Psoas muscle (tissue), 8 donors: ENCODE measurements at regions of chr21 and their contacts with region 1.

Region 1: DNA sequence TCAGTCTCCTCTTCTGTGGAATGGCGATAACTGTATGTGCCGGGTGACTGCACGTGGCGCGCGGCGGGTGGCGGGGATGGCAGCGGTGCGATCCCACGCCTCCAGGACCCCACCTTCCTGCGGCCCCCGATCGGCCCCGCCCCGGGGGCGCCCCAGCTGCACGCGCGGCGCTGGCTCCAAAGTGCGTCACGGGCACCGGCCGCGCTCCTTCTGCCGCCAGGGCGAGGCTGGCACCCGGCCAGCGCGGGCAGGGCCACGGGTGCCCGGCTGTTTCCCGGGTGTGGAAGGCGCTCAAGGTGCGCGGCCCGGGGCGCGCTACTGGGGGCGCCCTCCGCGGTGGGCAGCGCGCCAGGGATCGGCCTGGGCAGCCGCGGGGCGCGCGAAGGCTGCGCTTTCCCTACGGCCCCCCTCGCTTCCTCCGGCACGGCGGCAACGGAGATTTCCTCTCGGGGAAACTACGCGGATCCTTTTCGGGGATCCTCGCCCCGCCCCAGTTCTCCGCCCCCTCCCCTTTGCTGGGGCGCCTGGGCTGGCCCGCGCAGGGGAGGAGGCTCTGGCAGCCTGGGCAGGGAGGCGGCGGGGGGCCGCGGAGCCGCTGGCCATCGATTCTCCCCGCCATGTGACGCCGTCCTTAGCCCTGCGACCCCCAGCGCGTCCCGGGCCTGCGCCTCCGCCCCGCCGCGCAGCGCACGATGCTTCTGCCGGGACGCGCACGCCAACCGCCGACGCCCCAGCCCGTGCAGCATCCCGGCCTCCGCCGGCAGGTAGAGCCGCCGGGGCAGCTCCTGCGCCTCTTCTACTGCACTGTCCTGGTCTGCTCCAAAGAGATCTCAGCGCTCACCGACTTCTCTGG is at the start of gene EVA1C:
- DNase-seq: peak; percentile 74 to 84
- ATAC-seq: peak; percentile 72 to 81 (median 80)
- H3K4me3 ChIP-seq: peak within 1 kb of the TSS; percentile 86
- H3K27ac ChIP-seq: peak within 1 kb of the TSS; percentile 82
- H3K4me1 ChIP-seq: peaks cover 7% of the 10 kb centered on the region
- H3K27me3 ChIP-seq: no peaks in the 10 kb centered on the region
- CTCF ChIP-seq: peak; percentile 26
- total RNA-seq, gene EVA1C: 5.5 to 10.7 (median 7.3) TPM

Region 2: DNA sequence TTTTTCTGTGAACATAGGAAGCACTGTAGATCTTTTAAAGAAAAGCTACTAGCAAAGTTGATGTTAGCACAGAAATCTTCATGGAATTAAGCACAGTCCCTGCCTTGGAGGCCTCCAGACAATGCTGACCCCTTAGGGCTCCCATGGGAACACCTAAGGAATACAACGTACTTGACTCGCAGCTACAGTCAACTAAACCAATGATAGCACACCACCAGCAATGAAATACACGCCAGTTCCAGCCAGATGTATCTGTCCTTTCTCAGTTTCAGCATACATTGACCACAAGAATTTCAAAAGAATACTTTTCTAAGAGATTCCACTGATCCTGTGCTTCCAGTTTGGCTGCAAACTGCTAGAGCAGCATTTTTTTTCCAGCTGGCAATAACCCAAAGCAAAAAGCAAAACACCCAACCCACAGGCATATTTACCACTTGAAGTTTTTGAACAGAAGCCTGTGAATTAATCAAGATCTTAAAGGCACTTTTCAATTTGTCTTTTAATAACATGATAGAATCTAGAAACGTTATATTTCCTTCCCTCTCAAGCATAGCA is 1488.2 kb before region 1 on chr21:
- intact Hi-C with region 1: no loop called
- DNase-seq: no peak
- ATAC-seq: no peak
- H3K4me3 ChIP-seq: no peak overlapping the region
- H3K27ac ChIP-seq: no peak overlapping the region
- H3K4me1 ChIP-seq: no peaks in the 10 kb centered on the region
- H3K27me3 ChIP-seq: no peaks in the 10 kb centered on the region
- CTCF ChIP-seq: no peak

Region 3: DNA sequence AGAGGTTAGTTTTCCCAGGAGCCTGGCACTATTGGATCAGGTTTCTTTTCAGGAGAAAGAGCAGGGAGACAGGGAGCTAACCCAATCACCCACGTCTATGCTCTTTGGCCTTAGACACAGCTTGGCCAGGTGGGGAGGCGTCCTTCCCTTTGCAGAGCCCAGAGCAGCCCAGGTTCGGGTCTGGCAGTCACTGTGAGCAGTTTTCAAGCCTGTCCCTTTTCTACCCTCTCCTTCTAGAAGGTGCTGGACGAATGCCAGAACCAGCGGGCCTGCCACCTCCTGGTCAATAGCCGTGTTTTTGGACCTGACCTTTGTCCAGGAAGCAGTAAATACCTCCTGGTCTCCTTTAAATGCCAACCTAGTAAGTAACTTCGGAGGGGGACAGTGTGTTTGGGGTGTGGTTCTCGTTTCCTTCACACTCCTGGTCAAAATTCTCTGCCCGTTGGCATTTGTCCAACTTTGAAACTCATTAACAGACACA is 45.0 kb after region 1 on chr21:
- intact Hi-C with region 1: loop called in 1 of 2 experiments (anchors 5 kb)
- DNase-seq: peak; percentile 30 to 58
- ATAC-seq: peak in 3 of 4 donors; percentile 30 to 69 (median 40)
- H3K4me3 ChIP-seq: no peak overlapping the region
- H3K27ac ChIP-seq: no peak overlapping the region
- H3K4me1 ChIP-seq: peaks cover 8% of the 10 kb centered on the region
- H3K27me3 ChIP-seq: no peaks in the 10 kb centered on the region
- CTCF ChIP-seq: no peak

Region 4: DNA sequence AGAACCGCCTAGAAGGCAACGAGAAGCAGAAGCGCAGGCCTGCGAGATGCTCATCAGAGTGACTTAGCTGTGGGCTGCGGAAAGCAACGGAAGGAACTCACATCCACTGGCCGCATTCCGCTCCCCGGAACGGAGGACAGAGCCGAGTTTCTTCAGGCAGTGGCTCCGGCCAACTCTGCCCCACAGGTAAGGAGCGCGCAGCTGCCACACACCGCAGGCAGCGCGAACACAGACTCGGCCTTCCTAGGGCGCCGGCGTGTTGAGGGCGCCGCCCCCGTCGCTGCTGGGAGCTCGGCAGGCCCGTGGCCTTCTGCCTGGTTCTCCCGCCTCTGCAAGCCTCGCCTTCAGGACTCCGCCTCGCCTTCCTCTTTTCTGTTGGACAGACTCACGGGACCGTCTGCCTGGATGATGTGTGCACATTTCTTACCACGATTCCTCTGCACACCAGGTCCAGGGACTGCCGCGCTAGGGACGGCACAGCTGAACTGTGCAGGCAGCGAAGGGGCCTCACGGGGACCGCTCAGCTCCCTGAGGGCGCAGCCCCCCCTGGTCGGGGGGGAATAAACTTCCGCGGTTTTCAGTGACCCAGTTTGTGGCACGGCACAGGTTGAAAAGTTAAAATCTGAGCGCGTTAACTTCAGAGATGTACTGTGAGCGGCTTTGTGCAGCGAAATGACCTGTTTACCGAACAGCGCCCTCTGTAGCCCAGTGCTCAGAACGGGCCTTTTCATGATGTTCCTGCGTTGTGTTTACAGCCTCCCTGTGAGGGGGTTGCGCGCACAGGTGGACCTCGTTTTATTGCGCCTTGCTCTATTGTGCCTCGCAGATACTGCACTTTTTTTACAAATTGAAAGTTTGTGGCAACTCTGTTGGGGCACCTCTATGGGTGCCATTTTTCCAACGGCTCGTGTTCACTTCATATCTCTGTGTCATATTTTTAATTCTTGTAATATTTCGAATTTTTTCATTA is 157.2 kb after region 1 on chr21:
- intact Hi-C with region 1: loop called in 1 of 2 experiments (anchors 2 kb)
- DNase-seq: peak; percentile 69 to 78
- ATAC-seq: peak; percentile 72 to 97 (median 86)
- H3K4me3 ChIP-seq: peak overlapping the region; percentile 73
- H3K27ac ChIP-seq: peak overlapping the region; percentile 63
- H3K4me1 ChIP-seq: peaks cover 7% of the 10 kb centered on the region
- H3K27me3 ChIP-seq: no peaks in the 10 kb centered on the region
- CTCF ChIP-seq: peak; percentile 74

Region 5: GRCh38 chr21:33339918-33340317 is 927.5 kb after region 1 on chr21:
- intact Hi-C with region 1: no loop called
- DNase-seq: no peak
- ATAC-seq: no peak
- H3K4me3 ChIP-seq: no peak overlapping the region
- H3K27ac ChIP-seq: no peak overlapping the region
- H3K4me1 ChIP-seq: no peaks in the 10 kb centered on the region
- H3K27me3 ChIP-seq: no peaks in the 10 kb centered on the region
- CTCF ChIP-seq: no peak